ENCODE measurements at regions of chr5 and their contacts with region 1.

Region 1: DNA sequence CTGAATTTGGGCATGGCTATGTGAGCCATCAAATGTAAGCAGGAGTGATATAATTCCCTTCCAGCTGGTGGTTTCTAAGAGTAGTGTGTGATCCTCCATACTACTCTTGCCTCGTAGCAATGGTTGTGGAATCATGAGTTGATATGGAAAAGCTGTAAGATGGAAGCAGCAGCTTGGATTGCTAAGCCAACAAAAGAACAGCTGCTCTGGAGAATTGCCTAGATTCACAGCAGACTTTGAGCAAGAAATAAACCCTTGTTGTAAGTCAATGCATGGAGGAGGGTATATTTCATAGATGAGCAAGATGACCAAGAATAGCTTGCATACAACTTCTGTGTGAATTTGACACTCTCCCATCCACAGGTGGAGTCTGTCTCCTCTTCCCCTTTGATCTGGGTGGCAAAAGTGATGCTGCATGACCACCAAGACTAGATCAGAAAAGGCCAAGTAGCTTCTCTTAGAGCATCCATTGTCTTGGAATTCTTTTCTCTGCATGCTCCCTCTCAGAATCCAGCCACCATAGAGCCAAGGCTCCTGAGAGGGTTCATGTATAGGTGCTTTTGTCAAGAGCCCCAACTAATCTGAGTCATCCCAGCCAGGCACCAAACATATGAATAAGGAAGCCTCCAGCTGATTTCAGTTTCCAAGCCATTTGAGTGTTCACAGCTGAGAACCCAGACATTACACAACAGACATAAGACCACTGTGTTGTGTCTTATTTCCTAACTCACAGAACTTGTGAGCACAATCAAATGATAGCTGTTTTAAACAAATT is 79.0 kb downstream of the PRLR start:
- DNase-seq: no peak
- ATAC-seq: peak in 1 of 4 donors; percentile 59
- H3K4me3 ChIP-seq: no peak overlapping the region
- H3K27ac ChIP-seq: no peak overlapping the region
- H3K4me1 ChIP-seq: no peaks in the 10 kb centered on the region
- H3K27me3 ChIP-seq: no peaks in the 10 kb centered on the region
- CTCF ChIP-seq: no peak
- POLR2A ChIP-seq: no peak

Region 2: GRCh38 chr5:35089334-35090314 is 61.7 kb before region 1 on chr5:
- intact Hi-C with region 1: loop called in 1 of 10 experiments (anchors 2 kb)
- DNase-seq: peak in 3 of 5 donors; percentile 15 to 29 (median 24)
- ATAC-seq: peak in 1 of 4 donors; percentile 7
- H3K4me3 ChIP-seq: no peak overlapping the region
- H3K27ac ChIP-seq: no peak overlapping the region
- H3K4me1 ChIP-seq: no peaks in the 10 kb centered on the region
- H3K27me3 ChIP-seq: no peaks in the 10 kb centered on the region
- CTCF ChIP-seq: peak; percentile 42 to 72 (median 58)
- POLR2A ChIP-seq: no peak

Region 3: GRCh38 chr5:35988529-35988928 is 837.2 kb after region 1 on chr5:
- intact Hi-C with region 1: loop called in 1 of 10 experiments (anchors 10 kb)
- DNase-seq: no peak
- ATAC-seq: no peak
- H3K4me3 ChIP-seq: no peak overlapping the region
- H3K27ac ChIP-seq: no peak overlapping the region
- H3K4me1 ChIP-seq: no peaks in the 10 kb centered on the region
- H3K27me3 ChIP-seq: peaks cover 0 to 19% (median 0%) of the 10 kb centered on the region in 9 donors
- CTCF ChIP-seq: no peak
- POLR2A ChIP-seq: no peak